ENCODE measurements at regions of chr4 and their contacts with region 1.

Region 1: GRCh38 chr4:46270986-46271596 is 118.8 kb downstream of the GABRA2 start:
- DNase-seq: no peak
- H3K4me3 ChIP-seq: no peak overlapping the region
- H3K27ac ChIP-seq: no peak overlapping the region
- H3K4me1 ChIP-seq: no peaks in the 10 kb centered on the region
- H3K27me3 ChIP-seq: no peaks in the 10 kb centered on the region
- CTCF ChIP-seq: peak; percentile 13

Region 2: GRCh38 chr4:44760142-44760898 is 1510.8 kb before region 1 on chr4:
- intact Hi-C with region 1: loop called (anchors 10 kb)
- DNase-seq: no peak
- H3K4me3 ChIP-seq: no peak overlapping the region
- H3K27ac ChIP-seq: no peak overlapping the region
- H3K4me1 ChIP-seq: no peaks in the 10 kb centered on the region
- H3K27me3 ChIP-seq: no peaks in the 10 kb centered on the region
- CTCF ChIP-seq: no peak

Region 3: GRCh38 chr4:45453258-45453853 is 817.7 kb before region 1 on chr4:
- intact Hi-C with region 1: loop called (anchors 10 kb)
- DNase-seq: no peak
- H3K4me3 ChIP-seq: no peak overlapping the region
- H3K27ac ChIP-seq: no peak overlapping the region
- H3K4me1 ChIP-seq: no peaks in the 10 kb centered on the region
- H3K27me3 ChIP-seq: no peaks in the 10 kb centered on the region
- CTCF ChIP-seq: no peak

Region 4: DNA sequence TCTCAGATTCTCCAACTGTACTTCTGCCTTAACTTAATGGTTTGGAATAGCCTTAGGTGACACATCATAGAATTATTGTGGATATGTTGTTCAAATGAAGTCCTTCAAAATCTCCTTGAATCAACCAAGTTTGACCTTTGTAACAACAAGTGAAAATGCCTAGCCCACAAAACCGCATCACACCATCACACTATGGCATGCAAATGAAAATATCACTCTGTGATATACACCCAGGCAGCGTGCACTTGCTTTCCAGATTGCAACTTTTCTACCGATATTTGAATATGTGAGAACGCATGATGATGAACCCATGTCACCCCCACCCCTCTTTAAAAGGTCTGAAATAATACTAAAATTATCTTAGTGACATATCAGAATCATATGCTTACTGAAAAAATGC is 803.9 kb before region 1 on chr4:
- intact Hi-C with region 1: no loop called
- DNase-seq: no peak
- H3K4me3 ChIP-seq: no peak overlapping the region
- H3K27ac ChIP-seq: no peak overlapping the region
- H3K4me1 ChIP-seq: no peaks in the 10 kb centered on the region
- H3K27me3 ChIP-seq: no peaks in the 10 kb centered on the region
- CTCF ChIP-seq: no peak

Region 5: DNA sequence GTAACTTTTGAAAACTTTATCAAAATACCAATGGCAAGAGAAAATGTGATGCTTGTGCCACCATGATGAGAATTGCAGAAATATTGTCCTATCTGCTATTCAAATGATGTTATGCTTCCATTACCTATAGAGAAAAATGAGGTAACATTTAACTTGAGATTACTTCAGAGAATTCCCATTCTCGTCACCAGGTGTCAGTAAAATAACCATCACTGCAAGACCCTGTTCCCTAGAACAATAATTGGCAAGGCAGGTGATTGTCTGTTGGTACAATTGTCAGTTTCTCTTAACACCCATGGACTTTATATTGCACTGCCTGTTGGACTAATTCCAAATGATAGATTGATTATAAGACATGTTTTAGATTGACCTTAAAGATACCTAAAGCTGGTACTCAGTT is 327.1 kb before region 1 on chr4:
- intact Hi-C with region 1: no loop called
- DNase-seq: no peak
- H3K4me3 ChIP-seq: no peak overlapping the region
- H3K27ac ChIP-seq: no peak overlapping the region
- H3K4me1 ChIP-seq: no peaks in the 10 kb centered on the region
- H3K27me3 ChIP-seq: no peaks in the 10 kb centered on the region
- CTCF ChIP-seq: no peak